Pancreas (tissue), 10 donors: ENCODE measurements at regions of chr22 and their contacts with region 1.

Region 1: DNA sequence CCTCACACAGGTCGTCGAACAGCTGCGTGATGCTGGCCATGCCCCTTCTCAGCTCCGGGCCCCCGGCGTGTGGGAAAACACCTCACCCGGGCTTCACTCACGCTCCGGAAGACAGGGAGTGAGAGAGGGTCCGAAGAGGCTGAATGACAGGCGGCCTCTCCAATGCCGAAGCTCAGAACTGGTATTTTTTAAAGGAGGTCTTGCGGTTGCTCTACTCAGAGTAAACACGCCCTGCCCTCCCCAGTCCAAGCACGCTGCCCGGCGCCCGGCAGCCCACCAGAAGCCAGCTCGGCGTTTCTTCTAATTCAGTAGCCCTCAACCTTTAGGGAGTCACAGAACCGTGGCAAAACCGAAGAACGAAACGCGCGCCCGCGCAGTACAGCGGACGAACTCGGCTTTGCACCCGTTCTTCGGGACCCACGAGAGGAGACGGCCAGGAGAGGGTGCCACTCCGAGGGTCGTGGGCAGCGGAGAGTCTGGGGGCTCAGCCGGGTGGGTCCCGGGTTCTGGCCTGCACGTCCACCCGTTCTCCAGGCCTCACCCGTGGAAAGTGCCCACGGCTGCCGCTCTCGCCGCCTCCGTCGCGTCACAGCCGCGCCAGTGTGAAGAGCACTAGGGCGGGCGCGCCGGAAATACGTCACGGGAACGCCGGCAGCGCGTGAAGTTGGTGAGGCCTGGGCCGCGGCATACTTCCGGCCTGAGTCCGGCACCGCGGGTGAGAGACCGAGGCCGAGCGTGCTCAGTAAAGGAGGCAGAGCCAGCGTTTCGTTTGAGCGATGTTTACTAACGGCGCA is at the start of gene TUBGCP6:
- DNase-seq: peak; percentile 89 to 98 (median 93)
- ATAC-seq: peak; percentile 89 to 94 (median 91)
- H3K4me3 ChIP-seq: peak within 1 kb of the TSS; percentile 70 to 96 (median 86)
- H3K27ac ChIP-seq: peak within 1 kb of the TSS; percentile 78 to 91 (median 84)
- H3K4me1 ChIP-seq: peaks cover 10 to 30% (median 15%) of the 10 kb centered on the region in 3 donors
- H3K27me3 ChIP-seq: no peaks in the 10 kb centered on the region
- CTCF ChIP-seq: peak in 1 of 4 donors; percentile 29
- total RNA-seq, gene TUBGCP6: 19.2 to 36.7 (median 26.8) TPM

Region 2: GRCh38 chr22:50190182-50190940 is 54.3 kb before region 1 on chr22:
- intact Hi-C with region 1: no loop called
- DNase-seq: peak; percentile 80 to 95 (median 84)
- ATAC-seq: peak; percentile 59 to 71 (median 65)
- H3K4me3 ChIP-seq: peak overlapping the region; percentile 9 to 48 (median 40)
- H3K27ac ChIP-seq: peak overlapping the region; percentile 80 to 82 (median 80)
- H3K4me1 ChIP-seq: peaks cover 25 to 30% (median 26%) of the 10 kb centered on the region in 3 donors
- H3K27me3 ChIP-seq: no peaks in the 10 kb centered on the region
- CTCF ChIP-seq: no peak

Region 3: DNA sequence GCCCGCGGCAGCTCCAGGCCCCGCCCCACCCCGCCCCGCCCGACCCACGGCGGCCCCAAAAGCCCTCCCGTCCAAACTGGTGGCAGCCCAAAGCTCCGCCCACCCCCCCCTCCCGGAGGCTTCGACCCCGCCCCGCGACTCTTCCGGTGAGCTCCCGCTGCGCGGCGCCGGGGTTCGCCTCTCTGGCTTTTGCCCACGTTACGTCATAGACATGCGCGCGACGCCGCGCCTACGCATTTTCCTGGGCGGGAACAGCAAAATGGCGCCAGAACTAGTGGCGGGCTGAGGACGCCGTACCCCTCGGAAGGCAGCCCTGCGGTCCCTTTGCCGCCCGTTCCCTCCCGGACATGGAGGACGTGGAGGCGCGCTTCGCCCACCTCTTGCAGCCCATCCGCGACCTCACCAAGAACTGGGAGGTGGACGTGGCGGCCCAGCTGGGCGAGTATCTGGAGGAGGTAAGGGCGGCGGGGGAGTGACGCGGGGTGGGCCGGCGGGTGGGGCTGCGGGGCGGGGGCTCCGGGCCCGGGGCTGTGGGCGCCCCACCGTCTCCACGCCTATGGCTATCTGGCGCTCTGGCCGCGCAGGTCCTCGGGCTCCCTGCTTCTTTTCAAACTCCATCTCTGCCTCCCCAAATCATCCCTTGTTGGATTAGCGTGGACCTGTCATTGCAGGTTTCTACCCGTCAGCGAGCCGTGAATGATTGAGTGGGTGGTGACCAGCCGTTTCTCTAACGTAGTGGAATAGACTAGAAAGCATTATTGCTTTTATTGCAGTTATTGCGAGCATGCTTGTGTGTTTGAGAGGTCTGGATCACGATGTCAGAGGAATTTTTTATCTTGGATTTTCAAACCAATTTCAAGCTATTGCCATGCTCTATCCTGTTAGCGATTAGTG is 263.6 kb after region 1 on chr22 and contains the start of gene NCAPH2:
- intact Hi-C with region 1: loop called in 2 of 3 experiments (anchors 5 to 10 kb)
- DNase-seq: peak; percentile 95 to 99 (median 98)
- ATAC-seq: peak; percentile 46 to 80 (median 68)
- H3K4me3 ChIP-seq: peak within 1 kb of the TSS; percentile 68 to 90 (median 83)
- H3K27ac ChIP-seq: peak within 1 kb of the TSS; percentile 75 to 94 (median 85)
- H3K4me1 ChIP-seq: peaks cover 0 to 13% (median 0%) of the 10 kb centered on the region in 3 donors
- H3K27me3 ChIP-seq: no peaks in the 10 kb centered on the region
- CTCF ChIP-seq: no peak
- total RNA-seq, gene NCAPH2: 15.9 to 27.1 (median 23.0) TPM